ENCODE measurements at regions of chr2 and their contacts with region 1.

Region 1: DNA sequence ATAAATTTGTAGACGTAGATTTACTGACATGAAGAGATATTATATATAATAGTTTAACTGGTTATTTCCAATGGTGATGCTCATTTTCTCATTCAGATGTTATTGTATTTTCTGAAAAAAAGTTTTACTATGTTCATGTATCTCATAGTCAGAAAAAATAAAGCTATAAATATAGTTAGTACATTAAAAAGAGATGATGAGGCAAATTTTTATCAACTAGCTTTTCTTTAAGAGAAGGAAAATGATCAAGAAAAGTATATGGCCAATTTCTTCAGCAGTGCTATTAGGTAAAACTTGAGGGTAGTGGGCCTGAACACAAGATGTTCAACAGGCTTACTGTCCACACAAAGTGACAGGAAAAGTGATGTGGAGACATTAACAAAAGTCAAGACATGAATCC is 11.7 kb downstream of the TTC21B start:
- DNase-seq: no peak
- ATAC-seq: no peak
- H3K4me3 ChIP-seq: no peak overlapping the region
- H3K27ac ChIP-seq: no peak overlapping the region
- H3K4me1 ChIP-seq: no peaks in the 10 kb centered on the region
- H3K27me3 ChIP-seq: no peaks in the 10 kb centered on the region
- CTCF ChIP-seq: no peak

Region 2: GRCh38 chr2:165897726-165898125 is 44.1 kb before region 1 on chr2:
- intact Hi-C with region 1: loop called in 1 of 10 experiments (anchors 10 kb)
- DNase-seq: no peak
- ATAC-seq: no peak
- H3K4me3 ChIP-seq: no peak overlapping the region
- H3K27ac ChIP-seq: peak overlapping the region in 1 of 10 donors; percentile 26
- H3K4me1 ChIP-seq: peaks cover 0 to 24% (median 0%) of the 10 kb centered on the region in 9 donors
- H3K27me3 ChIP-seq: no peaks in the 10 kb centered on the region
- CTCF ChIP-seq: no peak